WTC11 (cell line): ENCODE measurements at regions of chr14 and their contacts with region 1.

Region 1: GRCh38 chr14:105086833-105087307 is 21.6 kb upstream of the GPR132 start:
- DNase-seq: peak; percentile 87
- ATAC-seq: peak; percentile 73
- H3K4me3 Mint-ChIP-seq: peak overlapping the region; percentile 63
- H3K27ac Mint-ChIP-seq: no peak overlapping the region
- H3K4me1 Mint-ChIP-seq: peaks cover 9% of the 10 kb centered on the region; the same call in 1 of the 2 replicates
- H3K27me3 Mint-ChIP-seq: peaks cover 57% of the 10 kb centered on the region
- CTCF ChIP-seq: peak; percentile 34; the same call in 1 of the 2 replicates

Region 2: DNA sequence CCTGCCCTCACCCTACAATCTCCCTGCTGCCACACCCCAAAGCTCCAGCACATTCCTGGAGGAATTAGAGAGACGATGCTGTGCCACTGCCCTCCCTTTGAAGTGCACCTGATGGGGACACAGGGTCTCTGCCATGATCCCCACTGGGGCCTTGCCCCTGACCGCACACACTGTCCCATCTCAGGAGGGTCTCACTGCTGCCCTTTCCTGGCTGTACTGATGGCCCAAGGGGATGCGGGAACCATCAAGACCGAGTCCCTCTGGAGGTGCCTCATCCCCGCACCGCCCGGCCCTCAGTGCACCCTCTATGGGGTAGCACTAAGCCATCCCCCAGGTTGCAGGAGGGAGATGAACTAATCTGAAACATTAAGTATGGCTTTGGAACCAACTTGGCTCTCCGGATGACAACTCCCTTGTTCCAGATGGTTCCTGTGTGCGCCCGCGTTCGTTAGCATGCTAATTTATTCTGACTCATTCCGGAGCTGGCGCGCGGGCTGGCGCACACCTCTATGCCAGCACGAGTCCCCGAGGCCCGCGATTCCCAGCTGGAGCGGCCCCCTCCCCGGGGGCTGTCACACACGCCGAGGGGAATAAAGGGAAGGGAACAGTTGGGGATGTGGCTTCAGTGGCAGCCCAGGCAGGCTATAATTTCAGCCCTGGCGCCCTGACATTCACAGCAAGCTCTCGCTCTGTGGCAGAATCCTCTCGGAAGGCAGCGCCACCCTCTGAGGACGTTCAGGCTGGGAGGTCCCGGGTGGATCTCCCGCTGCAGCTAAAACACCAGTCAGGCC is 541.5 kb before region 1 on chr14:
- CTCF ChIA-PET with region 1: no interaction called
- POLR2A ChIA-PET with region 1: no interaction called
- DNase-seq: no peak
- ATAC-seq: no peak
- H3K4me3 Mint-ChIP-seq: no peak overlapping the region
- H3K27ac Mint-ChIP-seq: no peak overlapping the region
- H3K4me1 Mint-ChIP-seq: peaks cover 10% of the 10 kb centered on the region
- H3K27me3 Mint-ChIP-seq: no peaks in the 10 kb centered on the region; the same call in 1 of the 2 replicates
- CTCF ChIP-seq: no peak

Region 3: GRCh38 chr14:105045710-105046326 is 41.1 kb before region 1 on chr14:
- CTCF ChIA-PET with region 1: interaction called, 15 read pairs
- POLR2A ChIA-PET with region 1: no interaction called
- DNase-seq: peak; percentile 96
- ATAC-seq: peak; percentile 92
- H3K4me3 Mint-ChIP-seq: no peak overlapping the region
- H3K27ac Mint-ChIP-seq: no peak overlapping the region
- H3K4me1 Mint-ChIP-seq: no peaks in the 10 kb centered on the region
- H3K27me3 Mint-ChIP-seq: peaks cover 20% of the 10 kb centered on the region
- CTCF ChIP-seq: peak; percentile 100

Region 4: GRCh38 chr14:105069871-105070759 is 16.8 kb before region 1 on chr14:
- CTCF ChIA-PET with region 1: interaction called, 28 read pairs
- POLR2A ChIA-PET with region 1: no interaction called
- DNase-seq: no peak
- ATAC-seq: no peak
- H3K4me3 Mint-ChIP-seq: no peak overlapping the region
- H3K27ac Mint-ChIP-seq: no peak overlapping the region
- H3K4me1 Mint-ChIP-seq: no peaks in the 10 kb centered on the region
- H3K27me3 Mint-ChIP-seq: no peaks in the 10 kb centered on the region
- CTCF ChIP-seq: no peak

Region 5: GRCh38 chr14:105138021-105138541 is 51.2 kb after region 1 on chr14:
- CTCF ChIA-PET with region 1: interaction called, 14 read pairs
- POLR2A ChIA-PET with region 1: no interaction called
- DNase-seq: no peak
- ATAC-seq: no peak; the same call in 1 of the 2 replicates
- H3K4me3 Mint-ChIP-seq: no peak overlapping the region
- H3K27ac Mint-ChIP-seq: no peak overlapping the region
- H3K4me1 Mint-ChIP-seq: no peaks in the 10 kb centered on the region
- H3K27me3 Mint-ChIP-seq: no peaks in the 10 kb centered on the region
- CTCF ChIP-seq: no peak

Region 6: DNA sequence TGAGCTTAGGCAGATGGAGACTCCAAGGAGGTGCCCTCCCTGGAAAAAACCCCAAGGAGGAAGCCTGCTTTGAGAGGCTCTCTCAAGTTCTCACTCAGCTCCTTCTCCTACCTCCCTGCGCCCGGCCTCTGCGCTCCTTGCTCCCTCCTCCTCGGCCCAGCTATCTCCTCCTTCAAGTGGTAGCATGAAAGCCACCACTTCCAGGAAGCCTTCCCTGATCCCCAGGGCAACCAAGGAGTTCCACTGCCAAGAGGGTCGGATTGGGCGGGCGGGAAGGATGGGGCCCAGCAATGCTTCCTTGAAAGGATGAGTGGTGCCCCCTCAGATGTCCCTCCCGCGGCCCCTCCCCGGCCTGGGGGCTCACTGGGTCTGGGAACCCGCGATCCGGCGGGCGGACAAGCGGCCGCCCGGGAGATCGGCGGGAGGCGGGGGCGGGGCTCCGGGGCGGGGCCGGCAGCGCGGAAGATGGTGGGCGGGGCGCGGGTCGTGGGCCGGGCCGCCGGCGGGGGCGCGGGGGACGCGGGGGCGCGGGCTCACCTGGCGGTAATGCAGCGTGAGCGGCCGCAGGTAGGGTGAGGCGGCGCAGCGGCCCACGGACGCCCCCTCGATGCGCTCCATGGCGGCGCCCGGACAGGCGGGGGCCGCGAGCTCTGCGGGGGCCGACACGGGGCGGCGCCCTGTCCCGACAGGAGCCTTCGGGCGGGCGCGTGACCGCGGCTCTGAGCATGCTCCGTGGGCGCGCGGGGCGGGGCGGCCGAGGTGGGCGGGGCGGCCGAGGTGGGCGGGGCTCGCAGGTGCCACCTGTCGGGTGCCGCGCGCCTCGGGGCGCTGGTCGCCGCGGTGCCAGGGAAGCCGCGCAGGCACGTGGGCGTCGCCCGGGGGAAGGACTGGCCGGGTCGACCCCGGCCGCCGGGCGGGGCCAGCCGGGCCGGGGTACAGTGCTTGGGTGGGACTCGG is 94.0 kb after region 1 on chr14 and contains the start of gene NUDT14:
- CTCF ChIA-PET with region 1: interaction called, 23 read pairs
- POLR2A ChIA-PET with region 1: interaction called, 4 read pairs
- DNase-seq: peak; percentile 78
- ATAC-seq: peak; percentile 66
- H3K4me3 Mint-ChIP-seq: peak within 1 kb of the TSS; percentile 71
- H3K27ac Mint-ChIP-seq: no peak within 1 kb of the TSS
- H3K4me1 Mint-ChIP-seq: peaks cover 3% of the 10 kb centered on the region; the same call in 1 of the 2 replicates
- H3K27me3 Mint-ChIP-seq: peaks cover 24% of the 10 kb centered on the region
- CTCF ChIP-seq: no peak
- total RNA-seq, gene NUDT14: 35.4 to 56.2 TPM (median 51.3 TPM) in 3 replicates

Region 7: DNA sequence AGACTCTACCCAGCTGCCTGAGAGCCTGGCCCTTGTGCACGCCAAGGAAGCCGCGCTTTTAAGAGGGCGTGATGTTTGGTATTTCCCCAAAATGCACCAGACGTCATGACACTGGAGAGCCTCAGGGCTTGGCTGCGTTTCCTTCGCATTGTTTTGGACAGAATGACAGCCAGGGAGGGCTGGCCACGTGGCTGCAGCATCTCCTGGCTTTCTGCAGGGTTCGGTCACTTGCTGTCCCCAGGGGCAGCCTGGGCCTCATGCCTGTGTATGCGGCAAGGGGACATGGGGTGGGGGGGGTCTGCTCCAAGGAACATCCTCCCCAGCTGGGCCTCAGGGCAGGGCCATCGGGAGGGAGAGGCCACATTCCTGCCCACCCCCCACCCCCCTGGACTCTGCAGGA is 110.4 kb after region 1 on chr14:
- CTCF ChIA-PET with region 1: interaction called, 13 read pairs
- POLR2A ChIA-PET with region 1: no interaction called
- DNase-seq: no peak
- ATAC-seq: no peak
- H3K4me3 Mint-ChIP-seq: no peak overlapping the region
- H3K27ac Mint-ChIP-seq: no peak overlapping the region
- H3K4me1 Mint-ChIP-seq: peaks cover 9% of the 10 kb centered on the region
- H3K27me3 Mint-ChIP-seq: peaks cover 24% of the 10 kb centered on the region
- CTCF ChIP-seq: no peak